Activated CD4-positive, alpha-beta T cell treated with anti-CD3 and anti-CD28 coated beads for 36 hours (primary cell): ENCODE measurements at regions of chr5 and their contacts with region 1.

Region 1: DNA sequence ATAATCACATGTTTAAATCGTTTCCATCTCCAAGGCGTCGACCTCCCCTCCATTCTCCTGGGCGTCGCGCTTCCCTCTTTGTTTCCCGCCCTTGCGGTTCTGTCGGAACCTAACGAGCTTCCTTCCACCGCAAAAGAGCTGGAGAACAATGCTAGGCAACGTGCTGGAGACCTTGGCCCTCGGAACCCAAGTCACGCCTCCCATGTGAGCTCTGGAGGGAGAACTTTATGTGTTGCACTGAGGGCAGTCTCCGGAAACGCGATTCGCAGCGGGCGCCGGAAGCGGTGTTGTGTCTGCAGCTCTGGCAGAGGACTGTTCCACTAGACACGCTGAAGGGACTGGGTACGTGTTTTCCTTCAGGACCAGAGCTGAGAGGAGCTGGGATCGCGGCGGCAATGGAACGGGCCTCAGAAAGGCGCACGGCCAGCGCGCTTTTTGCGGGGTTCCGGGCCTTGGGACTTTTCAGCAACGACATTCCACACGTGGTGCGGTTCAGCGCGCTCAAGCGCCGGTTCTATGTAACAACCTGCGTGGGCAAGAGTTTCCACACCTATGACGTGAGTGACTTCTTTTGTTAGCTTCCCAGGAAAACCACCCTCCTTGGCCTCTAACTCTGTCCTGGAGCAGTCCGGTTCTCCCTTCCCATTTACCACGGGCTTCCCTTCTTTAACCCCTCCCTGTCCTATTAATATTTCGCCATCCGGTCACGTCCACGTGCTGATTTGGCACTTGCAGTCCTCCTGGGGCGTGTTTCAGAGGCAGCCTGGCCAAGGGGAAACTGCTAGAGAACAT is at the start of gene WDR36:
- DNase-seq: peak; percentile 93
- ATAC-seq: peak; percentile 91
- H3K4me3 Mint-ChIP-seq: peak within 1 kb of the TSS; percentile 92
- H3K27ac Mint-ChIP-seq: peak within 1 kb of the TSS; percentile 96
- H3K4me1 Mint-ChIP-seq: peaks cover 31% of the 10 kb centered on the region
- H3K27me3 Mint-ChIP-seq: peaks cover 4% of the 10 kb centered on the region
- total RNA-seq, gene WDR36: 58.6 to 61.7 TPM

Region 2: GRCh38 chr5:110751902-110752762 is 340.1 kb before region 1 on chr5:
- CTCF ChIA-PET with region 1: interaction called, 3 read pairs
- POLR2A ChIA-PET with region 1: no interaction called
- intact Hi-C with region 1: loop called (anchors 2 to 5 kb)
- DNase-seq: peak; percentile 49
- ATAC-seq: peak; percentile 92
- H3K4me3 Mint-ChIP-seq: peak overlapping the region; percentile 20
- H3K27ac Mint-ChIP-seq: peak overlapping the region; percentile 83
- H3K4me1 Mint-ChIP-seq: peaks cover 46% of the 10 kb centered on the region
- H3K27me3 Mint-ChIP-seq: no peaks in the 10 kb centered on the region

Region 3: GRCh38 chr5:111072949-111073682 is 19.1 kb before region 1 on chr5:
- CTCF ChIA-PET with region 1: no interaction called
- POLR2A ChIA-PET with region 1: no interaction called
- intact Hi-C with region 1: loop called in 1 of 2 experiments (anchors 2 kb)
- DNase-seq: peak; percentile 82
- ATAC-seq: peak; percentile 73
- H3K4me3 Mint-ChIP-seq: peak overlapping the region; percentile 81
- H3K27ac Mint-ChIP-seq: peak overlapping the region; percentile 37
- H3K4me1 Mint-ChIP-seq: peaks cover 24% of the 10 kb centered on the region
- H3K27me3 Mint-ChIP-seq: peaks cover 62% of the 10 kb centered on the region

Region 4: DNA sequence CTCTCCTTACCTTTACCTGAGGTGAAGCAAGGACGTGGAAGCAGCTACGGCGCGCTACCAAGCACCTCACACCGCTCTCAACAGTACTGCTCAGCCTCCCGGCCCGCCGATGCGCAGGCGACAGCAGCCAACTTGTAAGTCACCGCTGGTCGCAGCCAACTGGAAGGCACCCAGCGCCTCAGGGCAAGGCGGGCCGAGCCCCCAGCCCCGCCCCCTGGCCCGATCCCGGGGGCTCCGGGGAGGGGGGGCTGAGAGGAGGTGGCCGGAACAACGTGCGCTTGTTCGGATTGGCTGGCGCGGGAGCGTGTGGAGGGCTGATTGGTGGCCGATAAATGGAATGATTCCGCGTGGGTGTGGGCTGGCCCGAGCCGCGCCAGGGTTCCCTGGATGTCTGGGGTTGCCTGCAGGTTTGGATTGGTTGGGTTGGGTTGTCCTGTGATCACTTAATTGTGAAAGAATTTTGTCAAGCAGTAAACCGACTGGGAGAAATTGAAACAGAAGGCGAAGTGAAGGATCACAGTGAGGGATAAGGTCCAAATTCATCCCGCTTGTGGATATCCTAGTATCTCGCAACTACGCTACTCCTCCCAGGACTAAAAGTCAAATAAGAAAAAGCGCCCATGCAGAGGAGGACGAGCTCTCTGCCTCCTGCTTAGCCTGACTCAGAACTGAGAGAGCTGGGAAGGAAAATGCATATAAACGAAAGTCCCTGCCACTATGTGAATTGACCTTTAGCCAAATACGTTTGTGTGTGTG is 420.3 kb after region 1 on chr5 and contains the start of gene STARD4:
- CTCF ChIA-PET with region 1: no interaction called
- POLR2A ChIA-PET with region 1: no interaction called
- intact Hi-C with region 1: loop called in 1 of 2 experiments (anchors 1 kb)
- DNase-seq: peak; percentile 97
- ATAC-seq: peak; percentile 94
- H3K4me3 Mint-ChIP-seq: peak within 1 kb of the TSS; percentile 99
- H3K27ac Mint-ChIP-seq: peak within 1 kb of the TSS; percentile 96
- H3K4me1 Mint-ChIP-seq: peaks cover 42% of the 10 kb centered on the region
- H3K27me3 Mint-ChIP-seq: no peaks in the 10 kb centered on the region
- total RNA-seq, gene STARD4: 54.2 to 55.3 TPM

Region 5: GRCh38 chr5:111859533-111860270 is 767.4 kb after region 1 on chr5:
- CTCF ChIA-PET with region 1: no interaction called
- POLR2A ChIA-PET with region 1: no interaction called
- intact Hi-C with region 1: no loop called
- DNase-seq: no peak
- ATAC-seq: no peak
- H3K4me3 Mint-ChIP-seq: no peak overlapping the region
- H3K27ac Mint-ChIP-seq: no peak overlapping the region
- H3K4me1 Mint-ChIP-seq: no peaks in the 10 kb centered on the region
- H3K27me3 Mint-ChIP-seq: peaks cover 5% of the 10 kb centered on the region

Region 6: GRCh38 chr5:112860929-112861637 is 1768.8 kb after region 1 on chr5 and contains the start of gene SRP19:
- CTCF ChIA-PET with region 1: no interaction called
- POLR2A ChIA-PET with region 1: no interaction called
- intact Hi-C with region 1: loop called in 1 of 2 experiments (anchors 5 kb)
- DNase-seq: peak; percentile 95
- ATAC-seq: peak; percentile 95
- H3K4me3 Mint-ChIP-seq: peak within 1 kb of the TSS; percentile 97
- H3K27ac Mint-ChIP-seq: peak within 1 kb of the TSS; percentile 98
- H3K4me1 Mint-ChIP-seq: peaks cover 32% of the 10 kb centered on the region
- H3K27me3 Mint-ChIP-seq: peaks cover 9% of the 10 kb centered on the region
- total RNA-seq, gene SRP19: 47.6 to 49.4 TPM